Activated T-helper 1 cell treated with anti-CD3 and anti-CD28 coated beads, Interleukin-12 subunit alpha, Interleukin-12 subunit beta, Interleukin-2, Interleukin-4 antibody, amounts not matched to agents 30 ng/mL and 10 ng/mL and 1 ng/mL, durations not matched to agents 14 hours and 24 hours and 36 hours (primary cell): ENCODE measurements at regions of chr4 and their contacts with region 1.

Region 1: DNA sequence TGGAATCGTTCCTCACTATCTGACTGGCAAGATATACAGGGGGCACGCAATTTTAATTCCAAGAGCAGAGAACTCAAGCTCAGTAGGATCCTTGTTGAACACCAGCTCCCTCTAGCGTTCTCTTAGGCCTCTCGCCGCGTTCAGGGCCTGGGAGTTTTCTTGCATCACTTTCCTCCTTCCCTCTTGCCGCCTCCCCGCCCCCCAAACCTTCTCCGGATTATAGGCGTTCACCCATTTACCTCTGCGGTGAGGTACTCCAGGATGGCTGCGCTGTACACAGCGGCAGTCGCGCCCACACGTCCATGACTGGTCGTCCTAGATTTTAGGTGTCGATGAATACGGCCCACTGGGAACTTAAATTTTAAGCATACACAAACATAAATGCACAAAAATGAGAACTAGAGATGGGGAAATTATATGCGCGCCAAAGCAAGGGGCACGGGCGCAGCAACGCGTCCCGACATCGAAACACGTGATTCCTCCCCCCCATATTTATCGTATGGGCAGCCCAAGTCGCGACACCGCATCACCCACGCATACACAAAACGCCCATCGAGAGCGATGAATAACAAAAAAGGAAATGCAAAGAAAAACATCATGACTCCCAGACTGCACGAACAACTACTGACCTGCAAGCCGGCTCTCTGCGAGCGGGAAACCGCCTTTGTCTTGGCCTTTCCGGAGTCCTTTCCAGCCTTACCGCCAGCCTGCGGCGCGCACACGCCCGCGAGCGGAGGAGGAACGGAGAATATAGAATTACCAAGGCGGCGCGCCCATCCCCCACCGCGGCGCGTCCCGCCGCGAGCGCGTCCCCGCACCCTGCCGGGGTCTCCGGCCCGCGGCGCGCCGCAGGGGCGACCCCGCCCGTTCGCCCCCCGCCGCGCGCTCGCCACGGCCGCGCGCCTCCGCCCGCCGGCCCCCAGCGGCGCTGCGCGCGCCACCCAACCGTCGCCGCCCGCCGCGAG is 759 bp downstream of the H2AZ1 start:
- DNase-seq: peak; percentile 82
- H3K4me3 Mint-ChIP-seq: no peak overlapping the region
- H3K27ac Mint-ChIP-seq: no peak overlapping the region
- H3K4me1 Mint-ChIP-seq: peaks cover 30% of the 10 kb centered on the region
- H3K27me3 Mint-ChIP-seq: no peaks in the 10 kb centered on the region

Region 2: DNA sequence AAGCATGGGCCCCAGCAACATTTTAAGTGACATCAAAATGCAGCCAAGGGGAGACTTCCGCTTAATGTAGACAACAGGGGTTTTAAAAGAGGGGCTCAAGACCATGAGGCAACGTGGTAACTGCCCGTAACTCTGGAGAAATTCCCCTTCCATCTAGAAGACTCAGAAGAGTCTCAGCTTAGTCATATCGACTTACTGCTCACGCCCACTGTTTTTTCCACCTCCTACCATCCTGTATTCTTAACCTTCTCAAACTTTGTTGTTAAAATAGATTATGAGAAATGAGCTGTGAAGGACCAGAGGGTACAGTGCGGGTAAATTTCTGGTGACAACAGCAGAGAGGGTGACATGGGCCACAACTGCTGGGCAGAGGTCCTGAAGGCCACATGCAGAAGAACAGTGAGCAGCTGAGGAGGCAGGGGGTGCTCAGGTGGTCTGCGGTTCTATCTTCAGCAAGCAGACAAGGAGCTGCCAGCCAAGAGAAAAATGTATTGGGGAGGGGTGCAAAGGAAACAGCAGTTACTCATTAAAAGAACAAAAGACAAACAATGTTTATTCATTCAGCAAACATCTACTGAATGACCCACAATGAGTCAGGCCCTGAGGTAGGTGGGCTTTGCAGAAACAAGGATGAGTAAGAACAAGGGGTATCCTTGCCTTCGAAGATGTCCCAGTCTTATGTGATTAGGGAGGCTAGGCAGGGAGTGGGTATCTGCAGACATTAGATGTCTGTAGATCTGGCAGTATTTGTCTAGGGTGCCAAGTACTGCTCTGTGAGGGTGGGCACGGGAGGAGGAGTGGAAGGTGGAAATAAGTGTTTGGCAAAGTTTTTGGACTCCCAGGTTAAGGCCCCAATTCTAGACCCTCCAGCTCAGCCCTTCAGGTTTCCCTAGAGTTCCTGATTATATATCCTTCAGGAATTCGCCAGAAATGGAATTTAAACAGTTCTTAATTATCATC is 1466.2 kb before region 1 on chr4:
- intact Hi-C with region 1: loop called (anchors 10 kb)
- DNase-seq: peak; percentile 40
- H3K4me3 Mint-ChIP-seq: peak overlapping the region; percentile 72
- H3K27ac Mint-ChIP-seq: peak overlapping the region; percentile 98
- H3K4me1 Mint-ChIP-seq: peaks cover 92% of the 10 kb centered on the region
- H3K27me3 Mint-ChIP-seq: no peaks in the 10 kb centered on the region

Region 3: DNA sequence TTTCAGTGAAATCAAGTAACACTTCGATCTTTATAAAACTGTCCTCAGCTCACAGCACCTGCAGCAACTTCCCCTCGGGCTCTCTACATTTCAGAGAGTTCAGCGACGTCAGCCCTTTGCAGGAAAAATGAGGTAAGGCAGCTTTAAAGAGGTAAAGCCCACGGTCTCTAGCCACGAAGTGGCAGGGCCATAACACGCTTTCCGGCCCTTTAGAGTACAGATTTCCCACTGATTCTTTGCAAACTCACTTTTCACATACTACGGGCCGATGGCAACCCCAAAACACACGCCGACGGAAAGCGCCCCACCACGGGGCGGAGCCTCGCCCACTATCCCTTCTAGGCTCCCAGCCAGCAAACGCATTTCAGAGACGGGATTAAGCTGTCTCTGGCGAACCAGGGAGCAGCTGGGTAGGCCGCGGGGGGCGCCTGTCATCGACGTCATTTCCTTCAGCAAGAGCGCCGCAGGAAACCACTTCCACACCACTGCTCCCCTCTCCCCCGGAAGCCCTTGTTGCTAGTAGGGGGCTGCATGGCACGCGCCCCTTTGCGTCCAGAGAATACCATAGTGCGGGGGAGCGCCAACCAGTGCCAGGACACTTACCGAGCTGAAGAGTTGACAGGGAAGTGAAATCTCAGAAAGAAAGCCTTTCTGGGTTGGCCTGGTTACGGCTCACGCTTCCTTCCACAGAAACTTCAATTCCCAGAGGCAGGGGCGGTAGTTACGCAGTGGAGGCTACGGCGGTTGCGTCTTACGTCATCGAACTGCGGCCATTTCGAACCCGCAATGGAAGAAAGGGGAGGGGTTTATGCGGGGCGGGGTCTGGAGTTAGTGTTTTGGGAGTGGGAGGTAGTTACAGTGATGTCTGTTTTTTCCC is 385.8 kb before region 1 on chr4 and contains the start of gene TRMT10A:
- intact Hi-C with region 1: loop called (anchors 1 kb)
- DNase-seq: peak; percentile 92
- H3K4me3 Mint-ChIP-seq: peak within 1 kb of the TSS; percentile 89
- H3K27ac Mint-ChIP-seq: peak within 1 kb of the TSS; percentile 96
- H3K4me1 Mint-ChIP-seq: peaks cover 25% of the 10 kb centered on the region
- H3K27me3 Mint-ChIP-seq: peaks cover 11% of the 10 kb centered on the region
- total RNA-seq, gene TRMT10A: 7.3 TPM in 2 replicates

Region 4: GRCh38 chr4:99847362-99847976 is 101.8 kb before region 1 on chr4:
- intact Hi-C with region 1: loop called (anchors 1 kb)
- DNase-seq: no peak
- H3K4me3 Mint-ChIP-seq: peak overlapping the region; percentile 59
- H3K27ac Mint-ChIP-seq: peak overlapping the region; percentile 95
- H3K4me1 Mint-ChIP-seq: peaks cover 83% of the 10 kb centered on the region
- H3K27me3 Mint-ChIP-seq: no peaks in the 10 kb centered on the region

Region 5: DNA sequence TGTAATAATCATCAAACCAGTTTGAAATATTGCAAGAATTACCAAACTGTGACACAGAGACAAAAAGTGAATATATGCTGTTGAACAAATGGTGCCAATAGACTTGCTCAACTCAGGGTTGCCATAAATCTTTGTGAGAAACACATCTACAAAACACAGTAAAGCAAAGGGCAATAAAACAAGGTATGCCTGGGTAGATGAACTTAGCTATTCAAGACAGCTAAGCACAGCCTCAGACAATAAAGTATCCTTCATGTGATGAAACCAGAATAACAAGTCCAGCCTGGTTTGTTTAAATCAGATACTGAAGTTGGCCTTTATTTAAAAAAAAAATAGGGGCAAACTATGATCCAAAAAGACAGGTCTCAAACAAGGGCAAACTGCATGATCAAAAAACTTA is 74.2 kb before region 1 on chr4:
- intact Hi-C with region 1: no loop called
- DNase-seq: no peak
- H3K4me3 Mint-ChIP-seq: no peak overlapping the region
- H3K27ac Mint-ChIP-seq: no peak overlapping the region
- H3K4me1 Mint-ChIP-seq: no peaks in the 10 kb centered on the region
- H3K27me3 Mint-ChIP-seq: no peaks in the 10 kb centered on the region

Region 6: GRCh38 chr4:99894161-99894997 is 54.9 kb before region 1 on chr4 and contains the start of gene LAMTOR3:
- intact Hi-C with region 1: loop called (anchors 1 kb)
- DNase-seq: peak; percentile 87
- H3K4me3 Mint-ChIP-seq: peak within 1 kb of the TSS; percentile 97
- H3K27ac Mint-ChIP-seq: peak within 1 kb of the TSS; percentile 95
- H3K4me1 Mint-ChIP-seq: peaks cover 42% of the 10 kb centered on the region
- H3K27me3 Mint-ChIP-seq: no peaks in the 10 kb centered on the region
- total RNA-seq, gene LAMTOR3: 28.6 and 29.7 TPM in 2 replicates

Region 7: GRCh38 chr4:100042227-100042626 is 92.9 kb after region 1 on chr4:
- intact Hi-C with region 1: no loop called
- DNase-seq: no peak
- H3K4me3 Mint-ChIP-seq: no peak overlapping the region
- H3K27ac Mint-ChIP-seq: no peak overlapping the region
- H3K4me1 Mint-ChIP-seq: no peaks in the 10 kb centered on the region
- H3K27me3 Mint-ChIP-seq: peaks cover 2% of the 10 kb centered on the region

Region 8: GRCh38 chr4:101328063-101328602 is 1378.8 kb after region 1 on chr4:
- intact Hi-C with region 1: loop called (anchors 5 kb)
- DNase-seq: peak; percentile 21
- H3K4me3 Mint-ChIP-seq: peak overlapping the region; percentile 45
- H3K27ac Mint-ChIP-seq: peak overlapping the region; percentile 81
- H3K4me1 Mint-ChIP-seq: peaks cover 31% of the 10 kb centered on the region
- H3K27me3 Mint-ChIP-seq: peaks cover 24% of the 10 kb centered on the region